ENCODE measurements at regions of chr4 and their contacts with region 1.

Region 1: GRCh38 chr4:40185830-40186664 is 10.8 kb upstream of the RHOH start:
- DNase-seq: peak; percentile 59
- CTCF ChIP-seq: no peak

Region 2: GRCh38 chr4:38547052-38547451 is 1639.0 kb before region 1 on chr4:
- CTCF ChIA-PET with region 1: no interaction called
- POLR2A ChIA-PET with region 1: no interaction called
- DNase-seq: no peak
- CTCF ChIP-seq: no peak

Region 3: DNA sequence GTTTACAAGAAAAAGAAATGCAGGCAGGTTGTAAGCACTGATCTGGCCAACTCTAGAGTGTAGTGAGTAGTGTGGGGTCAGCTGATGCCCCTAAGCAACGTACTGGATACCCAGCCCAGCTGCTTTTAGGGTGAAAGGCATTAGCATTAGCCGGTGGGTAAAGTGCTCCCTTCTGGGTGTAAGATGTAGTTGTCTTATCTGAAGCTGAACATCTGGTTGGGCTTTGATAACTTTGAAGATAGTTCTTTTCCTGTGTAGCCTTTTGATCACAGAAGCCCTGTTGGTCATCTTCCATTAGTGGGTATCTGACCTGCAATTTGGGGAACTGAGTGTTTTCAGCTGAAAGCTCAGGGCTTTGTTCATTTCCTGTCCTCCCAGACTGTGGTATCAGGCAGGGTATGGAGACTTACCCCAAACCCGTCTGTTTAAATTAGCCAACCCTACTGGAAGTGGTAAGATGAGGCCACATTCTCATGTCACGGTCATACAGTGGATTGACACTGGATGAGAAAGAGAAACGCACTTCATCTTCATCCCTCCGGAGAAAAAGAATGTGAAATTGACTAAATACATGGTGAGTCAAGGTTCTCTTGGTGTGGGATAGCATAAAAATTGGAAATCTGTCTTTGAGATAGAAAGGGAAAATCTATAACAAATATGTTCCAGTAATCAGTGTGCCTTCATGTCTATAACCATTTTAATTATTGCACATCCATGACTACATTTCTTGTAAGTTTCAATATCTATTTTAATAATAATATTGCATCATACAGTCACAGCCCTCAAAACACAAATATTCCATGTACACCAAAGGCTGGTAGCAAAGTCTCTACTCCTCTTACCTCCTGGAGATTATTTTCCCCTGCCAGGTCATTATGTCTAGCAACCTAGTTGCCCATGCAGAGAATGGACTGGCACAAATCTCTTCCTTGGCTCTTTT is 19.5 kb after region 1 on chr4:
- CTCF ChIA-PET with region 1: interaction called, 13 read pairs
- POLR2A ChIA-PET with region 1: interaction called, 5 read pairs
- DNase-seq: peak; percentile 51
- CTCF ChIP-seq: no peak

Measured in GM10248 (cell line).